OCI-LY7 (cell line): ENCODE measurements at regions of chr5 and their contacts with region 1.

Region 1: GRCh38 chr5:172714491-172715421 is 56.2 kb downstream of the DUSP1 start:
- DNase-seq: peak; percentile 71
- H3K4me3 ChIP-seq: no peak overlapping the region
- H3K27ac ChIP-seq: no peak overlapping the region
- H3K4me1 ChIP-seq: no peaks in the 10 kb centered on the region
- CTCF ChIP-seq: peak; percentile 84

Region 2: GRCh38 chr5:171907725-171908343 is 806.9 kb before region 1 on chr5:
- CTCF ChIA-PET with region 1: no interaction called
- POLR2A ChIA-PET with region 1: no interaction called
- intact Hi-C with region 1: no loop called
- DNase-seq: peak; percentile 68
- H3K4me3 ChIP-seq: no peak overlapping the region
- H3K27ac ChIP-seq: no peak overlapping the region
- H3K4me1 ChIP-seq: peaks cover 5% of the 10 kb centered on the region
- CTCF ChIP-seq: peak; percentile 97

Region 3: GRCh38 chr5:172833686-172834414 is 119.1 kb after region 1 on chr5 and contains the start of gene ERGIC1:
- CTCF ChIA-PET with region 1: interaction called, 4 read pairs
- POLR2A ChIA-PET with region 1: no interaction called
- intact Hi-C with region 1: loop called (anchors 10 kb)
- DNase-seq: peak; percentile 87
- H3K4me3 ChIP-seq: peak within 1 kb of the TSS; percentile 88
- H3K27ac ChIP-seq: peak within 1 kb of the TSS; percentile 94
- H3K4me1 ChIP-seq: peaks cover 44% of the 10 kb centered on the region
- CTCF ChIP-seq: no peak
- total RNA-seq, gene ERGIC1: 101 and 125 TPM in 2 replicates

Region 4: GRCh38 chr5:172910828-172911627 is 196.3 kb after region 1 on chr5:
- CTCF ChIA-PET with region 1: no interaction called
- POLR2A ChIA-PET with region 1: no interaction called
- intact Hi-C with region 1: loop called (anchors 1 kb)
- DNase-seq: peak; percentile 35
- H3K4me3 ChIP-seq: no peak overlapping the region
- H3K27ac ChIP-seq: no peak overlapping the region
- H3K4me1 ChIP-seq: peaks cover 9% of the 10 kb centered on the region
- CTCF ChIP-seq: peak; percentile 42

Region 5: GRCh38 chr5:172958331-172959046 is 243.7 kb after region 1 on chr5:
- CTCF ChIA-PET with region 1: no interaction called
- POLR2A ChIA-PET with region 1: no interaction called
- intact Hi-C with region 1: loop called (anchors 1 kb)
- DNase-seq: peak; percentile 67
- H3K4me3 ChIP-seq: peak overlapping the region; percentile 88
- H3K27ac ChIP-seq: peak overlapping the region; percentile 19
- H3K4me1 ChIP-seq: peaks cover 13% of the 10 kb centered on the region
- CTCF ChIP-seq: no peak

Region 6: DNA sequence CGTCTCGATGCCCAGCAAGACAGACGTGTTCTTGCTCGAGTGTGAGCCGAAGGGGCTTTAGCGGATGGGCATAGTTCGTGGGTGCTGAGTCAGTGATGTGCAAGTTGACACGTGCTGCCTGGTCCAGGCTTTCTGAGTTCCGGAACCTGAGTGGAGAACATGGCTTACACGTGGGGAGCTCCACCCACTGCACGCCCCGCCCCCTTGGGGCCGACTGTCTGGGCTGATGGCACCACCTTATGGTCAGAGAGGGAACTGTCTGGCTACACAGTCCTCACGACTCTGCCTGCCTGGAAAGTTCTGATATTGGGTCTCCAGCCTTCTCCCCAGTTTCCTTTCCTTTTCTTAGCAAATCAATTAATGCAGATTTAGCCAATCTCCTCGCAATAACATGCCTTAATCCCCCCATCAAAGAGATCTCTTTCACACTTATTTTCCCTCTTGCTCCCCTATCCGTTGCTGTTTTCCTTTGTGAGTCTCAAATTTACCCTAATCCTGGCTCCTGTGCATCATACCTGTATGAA is 617.3 kb after region 1 on chr5:
- CTCF ChIA-PET with region 1: interaction called, 3 read pairs
- POLR2A ChIA-PET with region 1: no interaction called
- intact Hi-C with region 1: loop called (anchors 1 kb)
- DNase-seq: peak; percentile 82
- H3K4me3 ChIP-seq: no peak overlapping the region
- H3K27ac ChIP-seq: no peak overlapping the region
- H3K4me1 ChIP-seq: no peaks in the 10 kb centered on the region
- CTCF ChIP-seq: peak; percentile 90